GM12878 (cell line): ENCODE measurements at regions of chr6 and their contacts with region 1.

Region 1: GRCh38 chr6:130047088-130047995 is 29.0 kb downstream of the L3MBTL3 start:
- DNase-seq: no peak
- ATAC-seq: no peak
- H3K4me3 ChIP-seq: no peak overlapping the region
- H3K27ac ChIP-seq: no peak overlapping the region
- H3K4me1 ChIP-seq: no peaks in the 10 kb centered on the region
- H3K27me3 ChIP-seq: no peaks in the 10 kb centered on the region
- CTCF ChIP-seq: peak in 1 of 3 experiments; percentile 9; a peak in 1 of 6 replicates
- EP300 ChIP-seq: no peak
- POLR2A ChIP-seq: no peak
- RAD21 ChIP-seq: peak; percentile 40

Region 2: DNA sequence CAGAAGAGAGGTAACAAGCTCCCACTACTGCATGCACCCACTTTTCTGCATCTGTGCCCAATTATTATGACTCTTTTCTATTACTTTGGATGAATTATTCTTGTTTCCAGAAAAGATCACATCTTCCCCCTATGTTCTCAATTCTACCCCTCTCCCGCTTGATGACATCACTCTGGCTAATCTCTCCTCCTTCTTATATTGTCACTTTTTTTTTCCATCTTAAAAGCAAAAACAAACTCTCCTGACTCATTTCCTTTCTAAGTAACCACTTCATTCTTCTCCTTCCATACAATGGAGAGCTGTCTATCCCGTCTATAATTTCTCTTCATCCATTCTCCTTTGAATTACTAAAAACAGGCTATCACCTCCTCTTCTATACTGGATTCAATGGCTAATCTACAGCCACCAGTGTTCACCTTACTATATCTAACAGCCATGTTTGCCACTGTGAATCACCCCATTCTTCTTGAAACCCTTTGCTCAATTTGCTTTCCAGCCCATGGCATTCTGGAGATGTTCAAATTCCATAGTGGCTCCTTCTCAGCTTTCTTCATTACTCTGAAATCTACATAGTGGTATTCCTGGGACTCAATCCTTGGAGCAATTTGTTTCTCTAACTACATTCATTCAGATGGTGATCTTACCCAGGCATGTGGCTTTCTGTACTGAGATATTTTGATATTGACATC is 715.7 kb before region 1 on chr6:
- CTCF ChIA-PET with region 1: no interaction called
- POLR2A ChIA-PET with region 1: no interaction called
- RAD21 ChIA-PET with region 1: no interaction called
- SMC1A ChIA-PET with region 1: no interaction called
- in situ Hi-C with region 1: no loop called
- intact Hi-C with region 1: no loop called
- DNase-seq: no peak
- ATAC-seq: no peak
- H3K4me3 ChIP-seq: no peak overlapping the region
- H3K27ac ChIP-seq: no peak overlapping the region
- H3K4me1 ChIP-seq: no peaks in the 10 kb centered on the region
- H3K27me3 ChIP-seq: no peaks in the 10 kb centered on the region; a peak in 2 of 4 replicates
- CTCF ChIP-seq: no peak
- EP300 ChIP-seq: no peak
- POLR2A ChIP-seq: no peak
- RAD21 ChIP-seq: no peak

Region 3: GRCh38 chr6:129485746-129486145 is 561.6 kb before region 1 on chr6:
- CTCF ChIA-PET with region 1: no interaction called
- POLR2A ChIA-PET with region 1: no interaction called
- RAD21 ChIA-PET with region 1: no interaction called
- SMC1A ChIA-PET with region 1: no interaction called
- in situ Hi-C with region 1: no loop called
- intact Hi-C with region 1: no loop called
- DNase-seq: no peak
- ATAC-seq: no peak
- H3K4me3 ChIP-seq: no peak overlapping the region
- H3K27ac ChIP-seq: no peak overlapping the region
- H3K4me1 ChIP-seq: peaks cover 17% of the 10 kb centered on the region
- H3K27me3 ChIP-seq: no peaks in the 10 kb centered on the region; a peak in 1 of 4 replicates
- CTCF ChIP-seq: no peak
- EP300 ChIP-seq: no peak
- POLR2A ChIP-seq: no peak
- RAD21 ChIP-seq: no peak

Region 4: GRCh38 chr6:130843575-130844320 is 796.4 kb after region 1 on chr6:
- CTCF ChIA-PET with region 1: interaction called, 3 read pairs
- POLR2A ChIA-PET with region 1: no interaction called
- RAD21 ChIA-PET with region 1: no interaction called
- SMC1A ChIA-PET with region 1: no interaction called
- in situ Hi-C with region 1: no loop called
- intact Hi-C with region 1: loop called (anchors 10 kb)
- DNase-seq: peak; percentile 9
- ATAC-seq: peak; percentile 86
- H3K4me3 ChIP-seq: no peak overlapping the region
- H3K27ac ChIP-seq: no peak overlapping the region
- H3K4me1 ChIP-seq: no peaks in the 10 kb centered on the region
- H3K27me3 ChIP-seq: no peaks in the 10 kb centered on the region
- CTCF ChIP-seq: peak; percentile 49 to 75 (median 62); a peak in 5 of 6 replicates
- EP300 ChIP-seq: no peak
- POLR2A ChIP-seq: no peak
- RAD21 ChIP-seq: peak; percentile 84